Activated CD8-positive, alpha-beta T cell treated with anti-CD3 and anti-CD28 coated beads for 36 hours (primary cell): ENCODE measurements at regions of chr7 and their contacts with region 1.

Region 1: GRCh38 chr7:150567169-150567568 is at the start of gene GIMAP4:
- DNase-seq: peak; percentile 51
- ATAC-seq: peak; percentile 64
- H3K4me3 Mint-ChIP-seq: peak within 1 kb of the TSS; percentile 84
- H3K27ac Mint-ChIP-seq: peak within 1 kb of the TSS; percentile 99
- H3K4me1 Mint-ChIP-seq: peaks cover 67% of the 10 kb centered on the region
- H3K27me3 Mint-ChIP-seq: no peaks in the 10 kb centered on the region
- CTCF ChIP-seq: no peak
- total RNA-seq, gene GIMAP4: 88.3 to 97.8 TPM

Region 2: GRCh38 chr7:150514748-150515222 is 52.4 kb before region 1 on chr7 and contains the start of gene GIMAP7:
- CTCF ChIA-PET with region 1: interaction called, 6 read pairs
- POLR2A ChIA-PET with region 1: interaction called, 13 read pairs
- intact Hi-C with region 1: loop called (anchors 5 kb)
- DNase-seq: peak; percentile 72
- ATAC-seq: peak; percentile 80
- H3K4me3 Mint-ChIP-seq: peak within 1 kb of the TSS; percentile 98
- H3K27ac Mint-ChIP-seq: peak within 1 kb of the TSS; percentile 99
- H3K4me1 Mint-ChIP-seq: peaks cover 46% of the 10 kb centered on the region
- H3K27me3 Mint-ChIP-seq: no peaks in the 10 kb centered on the region
- CTCF ChIP-seq: no peak
- total RNA-seq, gene GIMAP7: 29.0 to 29.5 TPM

Region 3: GRCh38 chr7:150553163-150553562 is 14.0 kb before region 1 on chr7:
- CTCF ChIA-PET with region 1: interaction called, 20 read pairs
- POLR2A ChIA-PET with region 1: interaction called, 3 read pairs
- intact Hi-C with region 1: no loop called
- DNase-seq: no peak
- ATAC-seq: no peak
- H3K4me3 Mint-ChIP-seq: no peak overlapping the region
- H3K27ac Mint-ChIP-seq: peak overlapping the region; percentile 78
- H3K4me1 Mint-ChIP-seq: peaks cover 66% of the 10 kb centered on the region
- H3K27me3 Mint-ChIP-seq: no peaks in the 10 kb centered on the region
- CTCF ChIP-seq: no peak

Region 4: DNA sequence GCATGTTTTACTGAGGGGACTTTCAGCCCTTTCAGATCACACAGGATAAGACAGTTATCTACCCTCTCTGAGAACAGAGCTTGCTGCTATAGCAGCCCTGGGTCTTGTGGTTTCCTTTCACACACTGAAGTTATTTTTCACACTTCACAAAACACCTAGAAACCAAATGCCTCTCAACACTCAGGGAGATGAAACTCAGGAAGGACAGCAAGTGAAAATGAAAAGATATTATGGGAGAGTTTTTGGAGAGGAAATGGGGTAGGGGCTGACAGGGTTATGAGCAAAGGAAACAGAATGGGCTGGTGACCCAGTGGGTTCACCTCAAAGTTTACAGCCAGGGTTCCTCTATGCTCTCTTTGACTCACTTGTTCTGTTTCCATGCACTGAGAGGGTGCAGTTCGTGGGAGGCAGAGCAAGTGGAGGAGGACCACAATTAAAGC is 101.3 kb after region 1 on chr7:
- CTCF ChIA-PET with region 1: interaction called, 6 read pairs
- POLR2A ChIA-PET with region 1: interaction called, 5 read pairs
- intact Hi-C with region 1: loop called (anchors 5 kb)
- DNase-seq: peak; percentile 85
- ATAC-seq: peak; percentile 73
- H3K4me3 Mint-ChIP-seq: peak overlapping the region; percentile 54
- H3K27ac Mint-ChIP-seq: peak overlapping the region; percentile 97
- H3K4me1 Mint-ChIP-seq: peaks cover 86% of the 10 kb centered on the region
- H3K27me3 Mint-ChIP-seq: no peaks in the 10 kb centered on the region
- CTCF ChIP-seq: no peak

Region 5: DNA sequence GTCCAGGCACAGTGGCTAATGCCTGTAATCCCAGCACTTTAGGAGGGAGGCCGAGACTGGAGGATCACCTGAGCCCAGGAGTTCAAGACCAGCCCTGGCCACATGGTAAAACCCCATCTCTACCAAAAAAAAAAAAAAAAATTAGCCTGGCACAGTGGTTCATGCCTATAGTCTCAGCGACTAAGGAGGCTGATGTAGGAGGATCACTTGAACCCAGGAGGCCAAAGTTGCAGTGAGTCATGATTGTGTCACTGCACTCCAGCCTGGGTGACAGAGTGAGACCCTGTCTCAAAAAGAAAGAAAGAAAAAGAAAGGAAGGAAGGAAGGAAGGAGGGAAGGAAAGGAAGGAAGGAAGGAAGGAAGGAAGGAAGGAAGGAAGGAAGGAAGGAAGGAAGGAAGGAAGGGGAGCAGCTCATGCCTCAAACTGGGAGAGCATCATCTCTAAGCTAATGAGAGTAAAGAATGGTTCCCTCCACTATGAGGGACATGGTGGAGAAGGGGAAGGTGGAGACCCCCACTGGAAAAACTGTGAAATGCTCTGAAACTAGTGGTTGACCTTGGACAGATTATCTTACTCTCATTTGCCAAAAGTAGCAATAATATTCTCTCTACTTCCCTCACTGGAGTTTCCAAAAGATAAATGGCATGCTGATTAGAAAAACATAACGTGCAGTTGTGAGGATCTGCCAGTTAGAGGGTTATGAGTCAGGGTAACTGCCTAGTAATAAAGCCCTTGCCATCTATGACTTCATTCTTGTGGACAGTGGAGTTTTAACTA is 186.8 kb after region 1 on chr7:
- CTCF ChIA-PET with region 1: interaction called, 10 read pairs
- POLR2A ChIA-PET with region 1: interaction called, 7 read pairs
- intact Hi-C with region 1: loop called (anchors 5 kb)
- DNase-seq: peak; percentile 60
- ATAC-seq: peak; percentile 60
- H3K4me3 Mint-ChIP-seq: no peak overlapping the region
- H3K27ac Mint-ChIP-seq: peak overlapping the region; percentile 95
- H3K4me1 Mint-ChIP-seq: peaks cover 77% of the 10 kb centered on the region
- H3K27me3 Mint-ChIP-seq: no peaks in the 10 kb centered on the region
- CTCF ChIP-seq: no peak